ENCODE measurements at regions of chr4 and their contacts with region 1.

Region 1: DNA sequence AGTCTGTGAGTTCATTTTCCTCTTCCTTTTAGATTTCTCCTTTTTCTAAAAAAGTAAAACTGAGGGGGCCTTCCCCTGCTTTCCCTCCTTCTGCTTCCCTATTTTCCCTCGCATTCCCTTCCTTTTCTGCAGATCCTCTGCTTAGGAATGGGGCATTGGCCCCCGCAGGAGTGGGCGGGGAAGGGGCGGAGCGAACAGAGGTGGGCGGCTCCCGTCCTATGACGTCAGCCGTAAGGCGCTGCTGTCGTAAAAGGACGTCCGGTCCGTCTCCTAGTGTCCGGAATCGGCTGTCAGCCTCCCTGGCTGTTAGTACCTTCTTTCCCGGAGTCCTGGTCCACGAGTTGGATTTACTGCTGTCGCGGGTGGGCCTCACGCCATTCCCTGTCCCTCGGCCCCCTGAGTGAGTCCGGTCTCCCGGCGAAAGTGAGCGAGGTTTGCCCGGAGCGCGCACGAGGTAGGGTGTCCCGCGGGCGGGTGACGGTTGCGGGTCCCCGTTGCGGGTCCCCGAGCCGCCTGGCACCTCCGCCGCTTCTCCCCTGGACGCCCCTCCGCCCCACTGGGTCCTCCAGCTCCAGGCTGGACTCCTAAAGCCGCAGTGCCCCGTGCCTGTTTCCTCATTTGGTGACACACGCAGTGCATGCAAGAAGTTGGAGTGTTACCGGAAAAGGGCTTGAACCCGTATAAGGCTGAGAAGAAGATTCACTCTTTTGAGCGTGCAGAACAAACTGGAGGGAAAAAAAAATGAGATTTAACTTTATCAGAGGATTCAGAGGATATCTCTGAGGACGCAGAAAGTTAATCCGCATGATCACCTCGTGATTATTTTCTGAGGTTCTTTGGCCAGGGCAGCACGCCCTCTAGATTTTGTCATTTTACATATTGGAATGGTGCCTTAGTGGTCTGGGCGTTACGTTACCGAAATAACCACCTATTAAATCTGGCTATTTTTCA is at the start of gene ZNF330:
- DNase-seq: peak; percentile 81
- H3K4me3 ChIP-seq: peak within 1 kb of the TSS; percentile 89
- H3K27ac ChIP-seq: peak within 1 kb of the TSS; percentile 82
- H3K27me3 ChIP-seq: no peaks in the 10 kb centered on the region
- CTCF ChIP-seq: peak; percentile 33; the same call in 1 of the 2 replicates
- polyA plus RNA-seq, gene ZNF330: 37.0 and 47.4 TPM in 2 replicates

Region 2: GRCh38 chr4:141174457-141174856 is 46.5 kb before region 1 on chr4:
- CTCF ChIA-PET with region 1: no interaction called
- POLR2A ChIA-PET with region 1: no interaction called
- DNase-seq: no peak
- H3K4me3 ChIP-seq: no peak overlapping the region
- H3K27ac ChIP-seq: no peak overlapping the region
- H3K27me3 ChIP-seq: peaks cover 4% of the 10 kb centered on the region
- CTCF ChIP-seq: no peak

Region 3: GRCh38 chr4:141207961-141208360 is 13.0 kb before region 1 on chr4:
- CTCF ChIA-PET with region 1: no interaction called
- POLR2A ChIA-PET with region 1: no interaction called
- DNase-seq: no peak
- H3K4me3 ChIP-seq: no peak overlapping the region
- H3K27ac ChIP-seq: no peak overlapping the region
- H3K27me3 ChIP-seq: no peaks in the 10 kb centered on the region
- CTCF ChIP-seq: no peak

Region 4: GRCh38 chr4:141703497-141703896 is 482.6 kb after region 1 on chr4:
- CTCF ChIA-PET with region 1: no interaction called
- POLR2A ChIA-PET with region 1: interaction called, 10 read pairs
- DNase-seq: no peak
- H3K4me3 ChIP-seq: no peak overlapping the region
- H3K27ac ChIP-seq: no peak overlapping the region
- H3K27me3 ChIP-seq: no peaks in the 10 kb centered on the region
- CTCF ChIP-seq: no peak

Measured in AG04450 (cell line).